CD8-positive, alpha-beta memory T cell (primary cell): ENCODE measurements at regions of chr4 and their contacts with region 1.

Region 1: GRCh38 chr4:75895744-75896314 is 6.4 kb downstream of the PPEF2 start:
- DNase-seq: peak in 2 of 5 donors; percentile 20 to 26
- H3K4me3 ChIP-seq: no peak overlapping the region
- H3K4me3 Mint-ChIP-seq: no peak overlapping the region
- H3K27ac ChIP-seq: no peak overlapping the region
- H3K27ac Mint-ChIP-seq: no peak overlapping the region
- H3K4me1 ChIP-seq: no peaks in the 10 kb centered on the region
- H3K4me1 Mint-ChIP-seq: no peaks in the 10 kb centered on the region
- H3K27me3 ChIP-seq: no peaks in the 10 kb centered on the region
- H3K27me3 Mint-ChIP-seq: no peaks in the 10 kb centered on the region

Region 2: GRCh38 chr4:75881476-75881875 is 14.4 kb before region 1 on chr4:
- CTCF ChIA-PET with region 1: interaction called, 11 read pairs
- POLR2A ChIA-PET with region 1: no interaction called
- DNase-seq: no peak
- H3K4me3 ChIP-seq: no peak overlapping the region
- H3K4me3 Mint-ChIP-seq: no peak overlapping the region
- H3K27ac ChIP-seq: no peak overlapping the region
- H3K27ac Mint-ChIP-seq: peak overlapping the region in 1 of 8 donors; percentile 69
- H3K4me1 ChIP-seq: no peaks in the 10 kb centered on the region
- H3K4me1 Mint-ChIP-seq: no peaks in the 10 kb centered on the region
- H3K27me3 ChIP-seq: no peaks in the 10 kb centered on the region
- H3K27me3 Mint-ChIP-seq: peaks cover 6 to 9% of the 10 kb centered on the region in 2 donors

Region 3: GRCh38 chr4:75930152-75930551 is 34.3 kb after region 1 on chr4:
- CTCF ChIA-PET with region 1: no interaction called
- POLR2A ChIA-PET with region 1: no interaction called
- DNase-seq: no peak
- H3K4me3 ChIP-seq: no peak overlapping the region
- H3K4me3 Mint-ChIP-seq: no peak overlapping the region
- H3K27ac ChIP-seq: no peak overlapping the region
- H3K27ac Mint-ChIP-seq: no peak overlapping the region
- H3K4me1 ChIP-seq: no peaks in the 10 kb centered on the region
- H3K4me1 Mint-ChIP-seq: peaks cover 2 to 6% (median 3%) of the 10 kb centered on the region in 3 donors
- H3K27me3 ChIP-seq: no peaks in the 10 kb centered on the region
- H3K27me3 Mint-ChIP-seq: no peaks in the 10 kb centered on the region

Region 4: GRCh38 chr4:76463568-76463967 is 567.7 kb after region 1 on chr4:
- CTCF ChIA-PET with region 1: no interaction called
- POLR2A ChIA-PET with region 1: no interaction called
- DNase-seq: no peak
- H3K4me3 ChIP-seq: no peak overlapping the region
- H3K4me3 Mint-ChIP-seq: no peak overlapping the region
- H3K27ac ChIP-seq: no peak overlapping the region
- H3K27ac Mint-ChIP-seq: no peak overlapping the region
- H3K4me1 ChIP-seq: no peaks in the 10 kb centered on the region
- H3K4me1 Mint-ChIP-seq: no peaks in the 10 kb centered on the region
- H3K27me3 ChIP-seq: no peaks in the 10 kb centered on the region
- H3K27me3 Mint-ChIP-seq: peaks cover 5 to 20% of the 10 kb centered on the region in 2 donors